ENCODE measurements at regions of chr17 and their contacts with region 1.

Region 1: DNA sequence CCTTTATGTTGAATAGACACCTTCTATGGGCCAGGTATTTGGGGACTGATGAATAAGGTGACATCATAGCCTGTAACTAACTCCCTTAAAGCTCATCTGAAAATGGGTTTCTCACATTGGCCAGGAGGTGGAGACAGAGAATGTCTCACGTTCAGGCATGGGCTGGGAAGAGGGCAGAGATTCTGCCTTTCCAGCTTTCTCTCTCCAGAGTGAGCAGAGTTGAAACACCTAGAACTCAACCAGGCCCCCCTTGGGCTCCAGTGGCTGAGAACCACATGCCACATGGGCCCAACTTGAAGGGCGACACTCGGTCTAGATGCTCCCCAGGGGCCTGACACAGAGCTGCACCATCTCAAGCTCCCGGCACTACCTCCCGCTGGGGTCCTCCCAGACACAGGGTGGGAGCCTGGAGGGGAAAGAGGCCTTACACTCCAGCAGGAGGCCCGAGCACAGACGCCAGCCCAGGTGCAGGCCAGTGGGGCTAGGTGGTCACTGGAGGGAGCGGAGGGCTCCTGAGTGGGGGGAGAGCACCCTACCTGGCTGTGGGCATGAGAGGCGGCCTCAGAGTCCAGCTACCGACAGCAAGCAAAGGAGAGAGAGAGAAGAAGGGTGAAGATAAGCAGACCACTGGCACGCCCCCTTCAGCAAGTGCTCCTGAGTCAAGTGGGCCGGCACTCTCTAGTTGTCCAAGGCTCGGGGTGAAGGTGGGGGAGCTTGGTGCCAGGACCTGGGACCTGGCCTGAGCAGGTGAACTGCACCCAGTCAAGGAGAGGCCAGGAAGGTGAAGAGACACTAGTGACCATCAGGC is 55.9 kb downstream of the MYO18A start:
- DNase-seq: peak; percentile 61 to 81 (median 65)
- H3K4me3 ChIP-seq: no peak overlapping the region
- H3K27ac ChIP-seq: peak overlapping the region in 1 of 5 donors; percentile 29
- H3K4me1 ChIP-seq: peaks cover 0 to 15% of the 10 kb centered on the region in 2 donors
- H3K27me3 ChIP-seq: no peaks in the 10 kb centered on the region
- CTCF ChIP-seq: peak; percentile 33 to 86 (median 78)
- POLR2A ChIP-seq: no peak

Region 2: GRCh38 chr17:29219378-29220047 is 95.2 kb after region 1 on chr17:
- intact Hi-C with region 1: loop called in 1 of 2 experiments (anchors 10 kb)
- DNase-seq: peak; percentile 83 to 91 (median 88)
- H3K4me3 ChIP-seq: no peak overlapping the region
- H3K27ac ChIP-seq: no peak overlapping the region
- H3K4me1 ChIP-seq: peaks cover 0 to 8% of the 10 kb centered on the region in 2 donors
- H3K27me3 ChIP-seq: no peaks in the 10 kb centered on the region
- CTCF ChIP-seq: peak; percentile 91 to 99 (median 97)
- POLR2A ChIP-seq: no peak